ENCODE measurements at regions of chr5 and their contacts with region 1.

Region 1: DNA sequence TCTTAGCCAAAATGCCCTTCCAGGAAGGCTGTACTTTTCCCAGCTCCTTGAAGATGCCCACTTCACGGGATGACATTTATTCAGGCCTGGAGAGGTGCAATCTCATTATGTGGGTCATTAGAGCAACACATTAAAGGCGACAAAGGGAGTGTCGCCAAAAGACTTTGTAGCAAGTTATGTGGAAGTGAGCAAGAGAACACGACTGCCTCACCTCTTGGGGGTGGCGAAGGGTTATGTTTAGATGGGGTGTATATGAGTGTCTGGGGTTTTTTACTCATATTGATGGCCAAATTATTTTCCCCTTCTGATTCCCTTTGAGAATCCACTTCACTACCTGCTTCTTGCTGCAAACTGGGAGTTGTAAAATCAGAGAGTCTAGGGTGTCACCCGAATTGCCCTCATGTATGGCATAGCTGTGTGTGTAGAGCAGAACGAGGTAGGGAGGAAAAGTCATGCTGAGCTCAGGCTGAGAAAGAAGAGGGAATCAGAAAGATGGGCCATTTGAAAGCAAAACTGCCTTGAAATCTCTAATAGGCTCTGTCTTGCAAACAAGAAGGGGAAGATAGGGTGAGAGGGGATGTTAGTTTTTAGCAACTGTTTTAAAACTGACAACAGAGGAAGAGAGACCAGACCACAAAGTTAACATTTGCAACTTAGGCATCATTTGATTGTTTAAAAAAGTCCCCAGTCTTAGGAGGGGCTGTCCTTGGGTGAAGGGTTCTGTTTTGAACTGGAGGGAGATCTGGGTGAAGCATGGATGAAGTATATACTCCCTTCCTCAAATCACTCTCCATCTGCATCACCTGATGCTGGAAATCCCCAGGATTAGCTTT is 97.1 kb upstream of the IL12B start:
- DNase-seq: peak; percentile 10
- H3K4me3 Mint-ChIP-seq: no peak overlapping the region
- H3K27ac Mint-ChIP-seq: no peak overlapping the region
- H3K4me1 Mint-ChIP-seq: peaks cover 20% of the 10 kb centered on the region
- H3K27me3 Mint-ChIP-seq: no peaks in the 10 kb centered on the region

Region 2: DNA sequence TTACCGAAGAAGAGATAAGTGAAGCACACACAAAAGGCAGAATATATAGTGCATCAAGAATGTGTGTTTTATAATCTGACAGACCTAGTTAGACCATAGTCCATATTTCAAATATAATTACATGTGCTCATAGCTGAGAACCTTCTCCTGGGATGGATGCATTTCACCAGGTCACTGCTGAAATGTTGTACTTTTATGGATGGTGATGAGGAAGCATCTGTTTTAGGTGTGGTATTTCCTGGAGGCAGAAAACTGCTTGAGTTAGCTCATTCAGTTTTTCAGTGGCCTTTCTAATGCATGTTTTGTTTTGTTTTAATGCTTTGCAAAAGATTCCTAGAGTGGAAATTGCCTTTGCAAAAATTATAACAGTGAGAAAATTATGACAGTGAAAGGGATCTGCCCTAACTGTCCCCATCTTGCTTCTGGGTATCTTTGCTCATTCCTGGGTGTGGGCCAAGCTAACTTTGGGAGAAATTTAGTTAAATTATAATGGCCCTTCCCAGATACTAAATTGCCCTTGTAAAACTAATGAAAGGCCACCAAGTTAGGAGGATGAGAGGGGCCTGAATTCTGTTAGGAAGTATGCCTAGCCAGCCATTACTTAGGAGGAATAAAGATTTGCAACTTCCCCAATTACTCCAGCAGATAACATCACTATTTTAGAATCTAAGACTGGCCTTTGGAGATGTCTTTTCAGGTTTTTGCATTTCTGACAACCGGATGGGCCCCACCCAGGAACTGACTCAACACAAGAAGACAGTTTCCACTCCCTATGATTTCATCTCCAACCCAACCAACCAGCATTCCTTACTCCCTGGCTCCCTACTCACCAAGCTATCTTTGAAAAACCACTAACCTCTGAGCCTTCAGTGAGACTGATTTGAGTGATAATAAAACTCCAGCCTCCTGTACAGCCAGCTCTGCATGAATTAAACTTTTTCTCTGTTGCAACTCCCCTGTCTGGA is 90.1 kb before region 1 on chr5:
- CTCF ChIA-PET with region 1: interaction called, 7 read pairs
- intact Hi-C with region 1: loop called (anchors 5 kb)
- DNase-seq: peak; percentile 64
- H3K4me3 Mint-ChIP-seq: no peak overlapping the region
- H3K27ac Mint-ChIP-seq: no peak overlapping the region
- H3K4me1 Mint-ChIP-seq: peaks cover 39% of the 10 kb centered on the region
- H3K27me3 Mint-ChIP-seq: no peaks in the 10 kb centered on the region